ENCODE measurements at regions of chr1 and their contacts with region 1.

Region 1: DNA sequence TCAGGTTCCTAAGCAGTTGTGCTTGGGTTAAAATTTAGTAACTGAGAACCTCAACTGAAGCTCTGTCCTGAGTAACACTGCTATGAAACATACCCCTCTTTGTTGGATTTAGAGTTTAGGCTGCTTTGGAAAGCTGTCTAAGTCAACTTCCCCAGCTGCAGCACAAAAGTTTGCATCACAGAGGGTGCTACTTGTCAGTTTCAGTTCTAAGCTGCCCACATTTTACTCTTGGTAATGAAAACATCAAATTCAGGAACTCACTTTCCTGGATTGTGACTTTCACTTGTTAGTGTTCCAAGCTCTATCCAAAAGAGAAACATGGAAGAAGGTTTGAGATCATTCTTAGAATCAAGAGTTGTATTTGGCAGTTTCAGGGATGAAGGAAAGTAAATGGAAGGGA is 191.7 kb upstream of the NFIA start:
- DNase-seq: no peak
- ATAC-seq: no peak
- H3K4me3 ChIP-seq: no peak overlapping the region
- H3K4me3 Mint-ChIP-seq: no peak overlapping the region
- H3K27ac ChIP-seq: no peak overlapping the region
- H3K27ac Mint-ChIP-seq: no peak overlapping the region
- H3K4me1 ChIP-seq: no peaks in the 10 kb centered on the region
- H3K4me1 Mint-ChIP-seq: no peaks in the 10 kb centered on the region
- H3K27me3 ChIP-seq: no peaks in the 10 kb centered on the region
- H3K27me3 Mint-ChIP-seq: peaks cover 2% of the 10 kb centered on the region
- CTCF ChIP-seq: no peak

Region 2: GRCh38 chr1:60904089-60904851 is 13.6 kb after region 1 on chr1:
- CTCF ChIA-PET with region 1: interaction called, 4 read pairs
- POLR2A ChIA-PET with region 1: no interaction called
- intact Hi-C with region 1: loop called in 1 of 2 experiments (anchors 1 kb)
- DNase-seq: no peak
- ATAC-seq: no peak
- H3K4me3 ChIP-seq: no peak overlapping the region
- H3K4me3 Mint-ChIP-seq: no peak overlapping the region
- H3K27ac ChIP-seq: no peak overlapping the region
- H3K27ac Mint-ChIP-seq: no peak overlapping the region
- H3K4me1 ChIP-seq: no peaks in the 10 kb centered on the region
- H3K4me1 Mint-ChIP-seq: no peaks in the 10 kb centered on the region
- H3K27me3 ChIP-seq: no peaks in the 10 kb centered on the region
- H3K27me3 Mint-ChIP-seq: no peaks in the 10 kb centered on the region
- CTCF ChIP-seq: no peak